ENCODE measurements at regions of chr22 and their contacts with region 1.

Region 1: GRCh38 chr22:17891481-17892167 is 117.4 kb upstream of the BID start:
- DNase-seq: peak; percentile 74

Region 2: DNA sequence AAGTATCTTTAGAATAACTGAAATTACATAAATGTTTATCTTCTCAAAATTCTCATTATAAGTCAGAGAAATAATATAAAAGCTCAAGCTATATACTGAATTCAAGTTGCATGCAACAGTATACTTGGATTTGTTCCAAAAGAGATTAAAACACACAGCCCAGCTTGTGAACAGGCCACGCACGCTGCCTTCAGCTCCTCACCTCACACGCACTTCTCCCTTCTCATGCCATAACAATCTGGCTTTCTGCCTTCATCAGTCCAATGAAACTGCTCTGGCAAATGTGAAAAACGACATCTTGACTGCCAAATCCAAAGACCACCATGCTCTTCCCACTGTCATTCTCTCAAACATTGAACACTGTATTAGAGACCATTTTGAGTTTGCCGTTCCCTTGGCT is 285.1 kb before region 1 on chr22:
- in situ Hi-C with region 1: no loop called
- DNase-seq: peak; percentile 25

Region 3: GRCh38 chr22:17853073-17853472 is 38.6 kb before region 1 on chr22:
- in situ Hi-C with region 1: no loop called
- DNase-seq: no peak

Region 4: GRCh38 chr22:18001040-18001893 is 109.6 kb after region 1 on chr22:
- in situ Hi-C with region 1: loop called (anchors 25 kb)
- DNase-seq: peak; percentile 98